ENCODE measurements at regions of chr7 and their contacts with region 1.

Region 1: GRCh38 chr7:143321734-143322133 is 5.8 kb downstream of the CLCN1 start:
- DNase-seq: peak in 2 of 5 donors; percentile 24 to 41
- ATAC-seq: peak in 3 of 4 donors; percentile 32 to 53 (median 45)
- H3K4me3 ChIP-seq: no peak overlapping the region
- H3K27ac ChIP-seq: peak overlapping the region in 1 of 12 donors; percentile 27
- H3K4me1 ChIP-seq: peaks cover 0 to 17% (median 0%) of the 10 kb centered on the region in 12 donors
- H3K27me3 ChIP-seq: no peaks in the 10 kb centered on the region
- CTCF ChIP-seq: peak in 1 of 12 donors; percentile 18
- POLR2A ChIP-seq: no peak

Region 2: GRCh38 chr7:142711746-142712619 is 609.8 kb before region 1 on chr7:
- intact Hi-C with region 1: loop called in 1 of 10 experiments (anchors 10 kb)
- DNase-seq: no peak
- ATAC-seq: peak in 1 of 4 donors; percentile 26
- H3K4me3 ChIP-seq: no peak overlapping the region
- H3K27ac ChIP-seq: peak overlapping the region in 1 of 12 donors; percentile 49
- H3K4me1 ChIP-seq: no peaks in the 10 kb centered on the region
- H3K27me3 ChIP-seq: peaks cover 0 to 4% (median 0%) of the 10 kb centered on the region in 9 donors
- CTCF ChIP-seq: peak; percentile 30 to 67 (median 57)
- POLR2A ChIP-seq: no peak

Region 3: GRCh38 chr7:143355450-143356385 is 34.0 kb after region 1 on chr7:
- intact Hi-C with region 1: loop called in 2 of 10 experiments (anchors 5 kb)
- DNase-seq: no peak
- ATAC-seq: no peak
- H3K4me3 ChIP-seq: no peak overlapping the region
- H3K27ac ChIP-seq: no peak overlapping the region
- H3K4me1 ChIP-seq: no peaks in the 10 kb centered on the region
- H3K27me3 ChIP-seq: peaks cover 0 to 20% (median under 1%) of the 10 kb centered on the region in 9 donors
- CTCF ChIP-seq: no peak
- POLR2A ChIP-seq: no peak

Region 4: GRCh38 chr7:143362131-143363015 is 40.6 kb after region 1 on chr7 and contains the start of gene FAM131B:
- intact Hi-C with region 1: loop called in 2 of 10 experiments (anchors 5 kb)
- DNase-seq: no peak
- ATAC-seq: peak in 2 of 4 donors; percentile 42
- H3K4me3 ChIP-seq: peak within 1 kb of the TSS; percentile 11 to 70 (median 51)
- H3K27ac ChIP-seq: peak within 1 kb of the TSS in 1 of 12 donors; percentile 25
- H3K4me1 ChIP-seq: peaks cover 0 to 18% (median 4%) of the 10 kb centered on the region in 12 donors
- H3K27me3 ChIP-seq: peaks cover 5 to 55% (median 32%) of the 10 kb centered on the region in 9 donors
- CTCF ChIP-seq: no peak
- POLR2A ChIP-seq: no peak
- total RNA-seq, gene FAM131B: 0.15 to 0.79 (median 0.42) TPM

Region 5: DNA sequence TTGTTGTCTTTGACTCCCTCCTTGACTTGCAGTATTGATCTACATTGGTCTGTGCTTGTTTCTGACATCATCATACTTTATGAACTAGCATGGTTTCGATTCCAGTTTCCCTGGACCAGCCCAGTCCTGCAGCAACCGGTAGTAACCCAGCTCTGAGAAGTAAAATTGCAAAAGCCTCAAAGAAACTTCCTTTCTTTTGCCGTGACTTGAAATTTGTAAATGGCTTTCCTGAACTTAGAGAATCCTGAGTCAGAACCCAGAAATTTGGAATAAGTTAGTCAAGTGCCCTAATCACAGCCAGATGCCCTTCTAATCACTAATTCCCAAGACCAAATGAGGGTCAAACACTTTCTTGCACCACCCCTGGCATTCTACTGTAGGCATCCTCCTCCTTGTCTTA is 136.5 kb after region 1 on chr7:
- intact Hi-C with region 1: no loop called
- DNase-seq: no peak
- ATAC-seq: no peak
- H3K4me3 ChIP-seq: no peak overlapping the region
- H3K27ac ChIP-seq: peak overlapping the region in 1 of 12 donors; percentile 78
- H3K4me1 ChIP-seq: peaks cover 0 to 13% (median 0%) of the 10 kb centered on the region in 12 donors
- H3K27me3 ChIP-seq: no peaks in the 10 kb centered on the region
- CTCF ChIP-seq: no peak
- POLR2A ChIP-seq: no peak

Measured in heart left ventricle (tissue), 16 donors.